PC-3 (cell line): ENCODE measurements at regions of chr1 and their contacts with region 1.

Region 1: DNA sequence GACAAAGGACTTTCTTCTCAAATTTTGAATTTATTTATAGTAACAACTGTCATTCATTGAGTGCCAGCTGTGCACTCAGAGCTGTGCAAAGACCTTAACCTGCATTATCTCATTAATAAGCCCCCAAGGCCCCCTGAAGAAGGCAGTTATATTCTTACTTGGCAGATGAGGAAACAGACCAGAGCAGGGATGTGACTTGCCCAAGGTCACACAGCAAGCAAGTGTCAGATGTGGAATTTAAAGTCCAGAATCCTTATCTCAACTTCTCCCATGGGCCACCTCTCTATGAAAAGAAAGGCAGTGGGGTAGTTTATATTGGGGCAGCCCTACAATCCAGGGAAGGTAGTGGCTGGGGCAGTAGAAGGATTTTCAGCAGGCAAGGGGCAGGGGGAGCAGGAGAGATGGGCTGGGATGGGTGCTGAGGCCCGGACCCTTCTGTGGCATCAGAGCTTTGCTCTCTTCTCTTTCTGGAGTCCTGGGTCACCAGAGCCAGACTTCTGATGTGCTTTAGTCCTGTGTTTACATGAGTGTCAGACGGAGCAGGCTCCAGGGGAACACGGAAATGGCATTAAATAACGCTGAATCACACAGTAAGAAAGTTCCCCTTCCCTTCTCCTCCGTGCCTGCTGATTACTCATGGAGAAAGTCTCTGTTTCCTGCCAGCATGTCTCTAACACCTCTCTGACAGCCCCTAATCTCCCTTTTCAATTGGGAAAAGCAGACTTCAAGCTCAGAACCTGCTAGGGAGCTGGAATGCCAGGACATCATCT is 39.5 kb downstream of the EPHB2 start:
- DNase-seq: peak; percentile 89
- ATAC-seq: peak; percentile 82
- H3K4me3 ChIP-seq: no peak overlapping the region
- H3K27ac ChIP-seq: peak overlapping the region; percentile 79
- H3K4me1 ChIP-seq: peaks cover 56% of the 10 kb centered on the region
- H3K27me3 ChIP-seq: no peaks in the 10 kb centered on the region
- CTCF ChIP-seq: no peak; the same call in 1 of the 2 replicates

Region 2: GRCh38 chr1:22689505-22689904 is 60.6 kb before region 1 on chr1:
- CTCF ChIA-PET with region 1: no interaction called
- POLR2A ChIA-PET with region 1: no interaction called
- intact Hi-C with region 1: no loop called
- DNase-seq: peak; percentile 96
- ATAC-seq: peak; percentile 99
- H3K4me3 ChIP-seq: no peak overlapping the region
- H3K27ac ChIP-seq: peak overlapping the region; percentile 17
- H3K4me1 ChIP-seq: peaks cover 14% of the 10 kb centered on the region
- H3K27me3 ChIP-seq: no peaks in the 10 kb centered on the region
- CTCF ChIP-seq: no peak

Region 3: DNA sequence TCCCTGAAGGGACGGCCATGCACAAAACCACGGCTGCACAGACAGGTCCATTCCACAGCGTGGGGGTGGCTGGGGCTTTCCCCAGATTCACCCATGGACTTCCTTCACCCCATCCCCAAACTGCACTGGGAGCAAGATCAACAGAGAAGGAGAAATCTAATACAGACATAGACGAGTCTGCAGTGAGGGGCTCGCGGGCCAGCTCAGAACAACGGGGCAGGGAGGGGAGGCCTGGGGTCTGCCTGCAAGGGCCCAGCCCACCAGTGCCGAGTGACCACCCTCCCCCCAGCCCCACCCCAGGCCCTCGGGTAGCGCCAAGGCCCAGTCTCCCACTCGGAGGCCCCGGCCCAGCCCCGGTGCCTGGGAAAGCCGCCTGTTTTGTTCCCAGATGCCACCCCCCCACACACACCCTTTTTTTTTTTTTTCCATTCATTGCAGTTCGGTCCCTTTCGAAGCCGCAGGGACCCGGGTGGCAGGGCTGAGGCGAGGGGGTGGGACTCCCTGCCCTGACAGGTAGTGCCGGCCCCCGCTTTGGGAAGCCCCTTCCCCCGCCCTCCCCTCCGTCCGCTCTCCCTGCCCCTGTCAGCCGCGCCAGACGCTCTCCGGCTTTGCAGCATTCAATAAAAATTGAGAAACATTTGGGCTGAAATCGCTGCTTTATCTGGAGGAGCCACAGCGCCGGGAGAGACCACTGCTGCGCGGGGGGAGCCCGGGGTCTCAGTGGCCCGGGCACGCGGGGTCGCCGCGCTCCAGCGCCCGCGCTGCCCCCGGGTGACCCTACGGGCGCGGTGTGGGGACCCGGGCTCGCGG is 40.0 kb before region 1 on chr1:
- CTCF ChIA-PET with region 1: interaction called, 6 read pairs
- POLR2A ChIA-PET with region 1: no interaction called
- intact Hi-C with region 1: loop called (anchors 5 kb)
- DNase-seq: peak; percentile 51
- ATAC-seq: peak; percentile 42
- H3K4me3 ChIP-seq: peak overlapping the region; percentile 69
- H3K27ac ChIP-seq: no peak overlapping the region
- H3K4me1 ChIP-seq: peaks cover 20% of the 10 kb centered on the region
- H3K27me3 ChIP-seq: no peaks in the 10 kb centered on the region
- CTCF ChIP-seq: no peak

Region 4: DNA sequence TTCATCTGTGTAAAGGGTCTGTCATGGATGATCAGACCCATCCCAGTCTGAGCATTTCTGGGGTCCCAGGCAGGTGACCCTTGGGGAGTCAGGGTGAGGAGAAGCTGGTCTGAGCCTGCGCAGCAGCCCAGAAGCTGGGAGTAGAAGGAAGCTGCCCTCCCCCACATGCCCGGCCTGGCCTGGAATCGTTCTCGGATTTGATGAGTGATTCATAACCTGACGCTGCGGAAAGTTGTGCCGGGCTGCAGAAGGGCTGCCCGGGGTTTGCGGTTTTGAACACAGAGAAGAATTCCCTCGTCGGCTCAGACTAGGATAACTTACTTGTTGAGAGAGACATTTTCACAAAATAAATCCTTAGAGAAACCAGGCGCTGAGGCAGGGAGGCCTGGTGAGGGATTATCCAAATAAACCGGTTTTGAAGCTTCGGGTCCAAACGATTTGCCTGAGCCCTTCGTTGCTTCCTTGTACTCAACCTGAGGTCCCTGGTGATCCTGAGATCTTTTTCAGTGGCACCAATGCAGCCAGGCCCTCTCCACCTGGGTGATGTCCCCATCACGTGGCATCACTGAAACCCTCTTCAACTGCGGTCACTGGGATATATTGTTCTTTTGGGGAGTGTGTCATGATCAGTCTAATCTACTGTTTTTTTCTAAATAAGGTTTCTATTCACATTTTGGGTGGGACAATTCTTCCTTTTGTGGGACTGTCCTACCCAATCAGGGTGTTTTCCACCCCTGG is 10.3 kb before region 1 on chr1:
- CTCF ChIA-PET with region 1: no interaction called
- POLR2A ChIA-PET with region 1: no interaction called
- intact Hi-C with region 1: no loop called
- DNase-seq: no peak
- ATAC-seq: no peak
- H3K4me3 ChIP-seq: no peak overlapping the region
- H3K27ac ChIP-seq: no peak overlapping the region
- H3K4me1 ChIP-seq: peaks cover 7% of the 10 kb centered on the region
- H3K27me3 ChIP-seq: no peaks in the 10 kb centered on the region
- CTCF ChIP-seq: no peak